Activated CD8-positive, alpha-beta memory T cell treated with anti-CD3 and anti-CD28 coated beads, Interleukin-2, amount 10 ng/mL, durations not matched to agents 7 days and 5 days (primary cell): ENCODE measurements at regions of chrX and their contacts with region 1.

Region 1: GRCh38 chrX:102950908-102951866 is 14.1 kb downstream of the RAB40AL start:
- DNase-seq: peak; percentile 49
- ATAC-seq: peak; percentile 70
- H3K4me3 Mint-ChIP-seq: no peak overlapping the region
- H3K27ac Mint-ChIP-seq: no peak overlapping the region
- H3K4me1 Mint-ChIP-seq: peaks cover 3% of the 10 kb centered on the region
- H3K27me3 Mint-ChIP-seq: no peaks in the 10 kb centered on the region

Region 2: GRCh38 chrX:102934624-102935023 is 16.6 kb before region 1 on chrX:
- CTCF ChIA-PET with region 1: interaction called, 10 read pairs
- DNase-seq: peak; percentile 41
- ATAC-seq: no peak
- H3K4me3 Mint-ChIP-seq: no peak overlapping the region
- H3K27ac Mint-ChIP-seq: no peak overlapping the region
- H3K4me1 Mint-ChIP-seq: no peaks in the 10 kb centered on the region
- H3K27me3 Mint-ChIP-seq: no peaks in the 10 kb centered on the region